GM12878 (cell line): ENCODE measurements at regions of chr3 and their contacts with region 1.

Region 1: DNA sequence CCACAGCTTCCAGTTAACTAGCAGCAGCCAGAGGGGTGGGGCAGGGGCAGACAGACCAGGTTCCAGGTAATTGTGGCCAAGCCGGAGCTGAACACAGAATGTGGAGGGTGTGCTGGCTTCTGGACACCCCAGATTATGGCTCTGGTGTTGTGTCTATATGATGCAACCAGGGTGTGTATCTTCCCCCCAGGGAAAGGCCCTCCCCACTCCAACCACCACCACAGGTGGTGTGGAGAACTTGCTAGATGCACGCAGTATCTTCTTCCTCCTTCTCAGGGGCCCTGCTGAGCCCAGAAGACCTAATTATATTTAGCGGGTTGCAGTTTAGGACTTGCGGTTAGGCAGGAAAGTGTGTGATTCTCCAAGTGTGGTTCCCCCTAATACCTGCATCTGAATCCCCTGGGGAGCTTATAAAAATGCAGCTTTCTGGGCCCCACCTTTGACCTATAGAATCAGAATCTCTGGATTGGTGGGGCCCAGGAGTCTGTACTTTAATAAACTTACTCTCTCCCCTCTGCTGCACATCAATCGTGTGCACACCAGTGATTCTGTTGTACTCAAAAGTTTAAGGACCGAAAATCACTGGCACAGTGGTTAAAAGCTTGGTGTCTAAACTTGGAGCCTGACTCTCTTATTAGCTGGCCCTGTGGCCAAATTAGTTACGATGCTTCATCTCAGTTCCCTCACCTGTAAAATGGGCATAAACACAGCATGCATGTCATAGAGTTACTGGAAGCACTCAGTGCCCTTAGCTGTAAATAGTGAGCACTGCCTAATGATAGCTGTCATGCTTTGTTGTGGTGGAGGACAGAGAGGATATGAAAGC is 379.1 kb upstream of the PROK2 start:
- DNase-seq: peak; percentile 96
- ATAC-seq: peak; percentile 90
- H3K4me3 ChIP-seq: 0 out of 2 replicates have a peak overlapping the region, but pooled peaks have one; percentile 32
- H3K27ac ChIP-seq: peak overlapping the region; percentile 93
- H3K4me1 ChIP-seq: peaks cover 35% of the 10 kb centered on the region
- H3K27me3 ChIP-seq: no peaks in the 10 kb centered on the region
- CTCF ChIP-seq: no peak
- EP300 ChIP-seq: peak; percentile 93
- POLR2A ChIP-seq: peak; percentile 72
- RAD21 ChIP-seq: peak; percentile 36

Region 2: DNA sequence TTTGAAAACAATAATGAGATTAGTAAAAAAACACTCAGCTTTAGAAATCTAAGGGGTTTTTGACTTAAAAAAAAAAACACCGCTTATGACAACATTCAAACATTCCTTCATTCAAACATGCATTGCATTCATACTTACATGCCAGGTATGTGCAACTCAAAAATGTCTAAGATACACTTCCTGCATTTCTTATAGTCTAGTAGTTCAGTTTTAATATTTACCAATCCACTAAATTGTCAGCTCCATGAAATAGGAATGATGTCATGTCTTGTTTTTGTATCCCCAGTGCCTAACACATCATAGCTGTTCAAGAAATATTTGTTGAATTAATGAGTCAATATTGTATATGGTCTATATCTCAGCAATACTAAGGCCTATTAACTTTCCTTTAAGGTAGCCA is 490.5 kb before region 1 on chr3:
- CTCF ChIA-PET with region 1: no interaction called
- POLR2A ChIA-PET with region 1: no interaction called
- RAD21 ChIA-PET with region 1: no interaction called
- SMC1A ChIA-PET with region 1: no interaction called
- in situ Hi-C with region 1: no loop called
- intact Hi-C with region 1: no loop called
- DNase-seq: no peak
- ATAC-seq: no peak
- H3K4me3 ChIP-seq: no peak overlapping the region
- H3K27ac ChIP-seq: no peak overlapping the region
- H3K4me1 ChIP-seq: no peaks in the 10 kb centered on the region
- H3K27me3 ChIP-seq: peaks cover 0 to 3% of the 10 kb centered on the region in 2 experiments; a peak in 2 of 4 replicates
- CTCF ChIP-seq: no peak
- EP300 ChIP-seq: no peak
- POLR2A ChIP-seq: no peak
- RAD21 ChIP-seq: no peak

Region 3: DNA sequence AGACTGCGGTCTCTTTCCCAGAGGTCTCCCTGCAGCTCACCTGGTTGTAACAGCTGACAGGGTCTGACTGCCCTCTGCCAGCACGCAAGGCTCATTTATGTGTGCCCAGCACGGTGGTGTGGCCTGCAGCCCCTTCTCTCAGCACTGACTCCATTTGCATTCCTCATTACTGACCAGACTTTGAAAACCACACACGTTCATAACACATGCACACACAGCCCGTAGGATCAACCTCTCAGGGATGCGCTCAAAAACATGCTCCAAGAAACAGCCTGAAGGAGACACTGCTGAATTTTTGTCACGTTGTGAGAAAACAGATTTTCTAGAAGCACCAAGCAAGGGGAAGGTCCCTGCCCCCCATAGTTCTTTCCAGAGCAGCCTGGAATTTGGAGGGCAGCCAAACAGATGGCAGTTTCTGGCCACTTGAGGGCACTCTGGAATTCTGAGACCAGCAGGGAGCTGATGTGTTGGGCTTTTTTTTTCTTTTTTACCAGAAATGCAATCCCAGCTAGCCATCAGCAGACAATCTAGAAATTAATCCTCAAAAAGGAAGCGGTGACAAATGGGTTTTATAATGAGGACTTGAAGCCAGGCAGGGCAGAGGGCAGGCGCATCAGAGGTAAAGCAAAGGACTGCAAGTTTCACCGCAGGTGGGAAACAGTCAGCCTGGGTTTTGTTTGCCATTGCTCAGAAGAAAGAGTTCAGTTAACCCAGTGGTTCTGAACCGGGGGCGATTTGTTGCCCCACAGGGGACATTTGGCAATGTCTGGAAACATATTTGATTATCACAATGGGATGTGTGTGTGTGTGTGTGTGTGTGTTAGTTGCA is 208.6 kb before region 1 on chr3:
- CTCF ChIA-PET with region 1: interaction called, 3 read pairs
- POLR2A ChIA-PET with region 1: no interaction called
- RAD21 ChIA-PET with region 1: no interaction called
- SMC1A ChIA-PET with region 1: interaction called, 9 read pairs
- in situ Hi-C with region 1: no loop called
- intact Hi-C with region 1: loop called (anchors 10 kb)
- DNase-seq: peak; percentile 61
- ATAC-seq: peak; percentile 81
- H3K4me3 ChIP-seq: no peak overlapping the region
- H3K27ac ChIP-seq: no peak overlapping the region
- H3K4me1 ChIP-seq: peaks cover 22% of the 10 kb centered on the region
- H3K27me3 ChIP-seq: no peaks in the 10 kb centered on the region
- CTCF ChIP-seq: peak; percentile 46 to 81 (median 67); a peak in 5 of 6 replicates
- EP300 ChIP-seq: no peak
- POLR2A ChIP-seq: no peak
- RAD21 ChIP-seq: peak; percentile 85

Region 4: GRCh38 chr3:72082186-72082715 is 81.8 kb before region 1 on chr3:
- CTCF ChIA-PET with region 1: interaction called, 4 read pairs
- POLR2A ChIA-PET with region 1: interaction called, 3 read pairs
- RAD21 ChIA-PET with region 1: interaction called, 25 read pairs
- SMC1A ChIA-PET with region 1: interaction called, 46 read pairs
- in situ Hi-C with region 1: no loop called
- intact Hi-C with region 1: loop called (anchors 1 kb)
- DNase-seq: peak; percentile 80
- ATAC-seq: peak; percentile 79
- H3K4me3 ChIP-seq: peak overlapping the region; percentile 33; the same call in 1 of the 2 replicates
- H3K27ac ChIP-seq: peak overlapping the region; percentile 78
- H3K4me1 ChIP-seq: peaks cover 71% of the 10 kb centered on the region
- H3K27me3 ChIP-seq: no peaks in the 10 kb centered on the region
- CTCF ChIP-seq: no peak
- EP300 ChIP-seq: peak; percentile 46 to 69; a peak in 2 of 4 replicates
- POLR2A ChIP-seq: no peak
- RAD21 ChIP-seq: no peak

Region 5: DNA sequence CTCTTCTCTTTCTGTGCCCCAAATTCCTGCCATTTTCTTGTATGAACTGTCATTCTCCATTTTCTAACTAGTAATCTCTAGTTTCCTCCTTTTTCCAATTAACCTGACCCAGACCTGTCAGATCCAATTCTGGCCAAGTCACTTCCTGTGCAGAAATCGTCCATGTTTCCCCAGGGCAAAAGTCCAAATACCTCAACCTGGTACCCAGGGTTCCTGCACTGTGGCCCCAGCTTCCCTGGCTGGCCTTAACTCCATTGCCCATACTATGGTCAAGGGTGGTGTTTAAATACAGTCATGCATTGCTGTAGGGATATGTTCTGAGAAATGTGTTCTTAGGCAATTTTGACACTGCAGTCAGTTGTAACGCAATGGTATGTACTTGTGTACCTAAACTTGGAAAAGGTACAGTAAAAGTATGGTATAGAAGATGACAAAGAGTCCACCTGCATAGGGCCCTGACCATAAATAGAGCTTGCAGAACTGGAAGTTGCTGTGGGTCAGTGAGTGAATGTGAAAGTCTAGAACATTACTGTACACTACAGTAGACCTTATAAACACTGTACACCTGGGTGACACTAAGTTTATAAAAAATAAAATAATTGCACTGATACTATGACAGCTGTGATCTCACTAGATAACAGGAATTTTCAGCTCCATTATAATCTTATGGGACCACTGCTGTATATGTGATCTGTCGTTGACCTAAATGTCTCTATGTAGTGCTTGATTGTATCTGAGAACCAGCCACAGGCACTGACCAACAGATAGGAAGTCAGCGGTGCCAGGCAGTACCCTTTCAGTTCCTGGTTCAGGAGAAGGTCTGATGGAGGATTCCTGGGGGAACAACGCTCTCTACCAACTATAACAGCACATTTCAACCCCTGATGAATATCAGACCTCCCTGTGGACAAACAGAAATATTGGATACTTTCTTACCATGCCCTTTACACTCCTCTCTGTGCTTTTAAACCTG is 42.9 kb before region 1 on chr3:
- CTCF ChIA-PET with region 1: no interaction called
- POLR2A ChIA-PET with region 1: no interaction called
- RAD21 ChIA-PET with region 1: no interaction called
- SMC1A ChIA-PET with region 1: interaction called, 3 read pairs
- in situ Hi-C with region 1: no loop called
- intact Hi-C with region 1: loop called (anchors 1 kb)
- DNase-seq: peak; percentile 16
- ATAC-seq: peak; percentile 91
- H3K4me3 ChIP-seq: no peak overlapping the region
- H3K27ac ChIP-seq: no peak overlapping the region
- H3K4me1 ChIP-seq: peaks cover 25% of the 10 kb centered on the region
- H3K27me3 ChIP-seq: no peaks in the 10 kb centered on the region
- CTCF ChIP-seq: no peak
- EP300 ChIP-seq: no peak; a peak in 1 of 4 replicates
- POLR2A ChIP-seq: no peak
- RAD21 ChIP-seq: no peak

Region 6: GRCh38 chr3:72177083-72178050 is 13.3 kb after region 1 on chr3:
- CTCF ChIA-PET with region 1: interaction called, 6 read pairs
- POLR2A ChIA-PET with region 1: interaction called, 10 read pairs
- RAD21 ChIA-PET with region 1: interaction called, 23 read pairs
- SMC1A ChIA-PET with region 1: interaction called, 44 read pairs
- in situ Hi-C with region 1: no loop called
- intact Hi-C with region 1: loop called (anchors 1 kb)
- DNase-seq: no peak
- ATAC-seq: peak; percentile 64
- H3K4me3 ChIP-seq: peak overlapping the region; percentile 39
- H3K27ac ChIP-seq: peak overlapping the region; percentile 85
- H3K4me1 ChIP-seq: peaks cover 29% of the 10 kb centered on the region
- H3K27me3 ChIP-seq: no peaks in the 10 kb centered on the region
- CTCF ChIP-seq: no peak
- EP300 ChIP-seq: peak; percentile 21 to 40; a peak in 2 of 4 replicates
- POLR2A ChIP-seq: no peak
- RAD21 ChIP-seq: no peak

Region 7: DNA sequence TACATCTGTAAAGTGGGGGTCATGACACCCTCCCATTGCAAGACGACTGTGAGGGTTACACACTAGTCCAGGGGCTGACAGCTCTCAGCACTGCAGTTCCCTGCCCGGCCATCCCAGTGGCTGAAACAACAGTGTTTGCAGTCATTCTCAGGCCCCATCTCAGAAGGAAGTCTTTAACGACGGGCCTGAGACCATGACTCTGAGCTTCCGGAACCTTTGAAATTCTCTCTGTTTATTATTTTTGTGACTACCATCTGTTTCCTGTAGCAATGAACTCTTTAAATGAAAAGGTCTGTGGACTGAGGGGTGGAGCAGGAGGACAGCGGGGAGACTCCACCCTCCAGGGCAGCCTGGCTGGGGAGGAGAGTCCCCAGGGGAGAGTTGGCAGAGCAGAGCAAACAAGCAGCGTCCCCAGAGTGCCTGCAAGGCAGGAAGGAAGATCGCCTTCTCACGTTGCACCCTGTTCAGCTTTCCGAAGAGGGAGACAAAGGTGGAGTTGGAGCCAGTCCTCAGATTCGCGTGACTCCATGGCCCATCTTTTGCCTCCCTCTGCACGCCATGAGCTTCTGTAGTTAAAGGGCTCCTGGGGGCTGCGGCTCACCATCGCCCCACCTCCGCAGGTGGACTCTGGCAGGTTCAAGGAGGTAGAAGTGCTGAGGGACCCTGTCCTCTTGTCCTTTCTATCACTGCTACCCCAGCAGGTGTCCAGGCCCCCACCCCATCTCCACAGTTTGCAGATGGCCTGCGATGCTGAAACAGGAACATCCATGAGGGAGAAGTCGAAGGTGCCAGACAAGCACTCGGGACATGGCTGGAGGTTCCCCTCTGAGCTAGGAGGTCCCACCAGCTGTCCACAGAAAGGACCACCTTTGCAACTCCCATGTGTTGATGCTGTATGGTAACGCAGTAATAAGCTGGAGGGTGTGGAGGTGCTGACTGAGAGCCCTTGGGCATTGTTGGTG is 146.7 kb after region 1 on chr3:
- CTCF ChIA-PET with region 1: no interaction called
- POLR2A ChIA-PET with region 1: no interaction called
- RAD21 ChIA-PET with region 1: interaction called, 3 read pairs
- SMC1A ChIA-PET with region 1: no interaction called
- in situ Hi-C with region 1: no loop called
- intact Hi-C with region 1: loop called (anchors 1 kb)
- DNase-seq: peak; percentile 84
- ATAC-seq: peak; percentile 96
- H3K4me3 ChIP-seq: no peak overlapping the region
- H3K27ac ChIP-seq: no peak overlapping the region
- H3K4me1 ChIP-seq: peaks cover 19% of the 10 kb centered on the region
- H3K27me3 ChIP-seq: no peaks in the 10 kb centered on the region
- CTCF ChIP-seq: no peak
- EP300 ChIP-seq: no peak
- POLR2A ChIP-seq: peak; percentile 38; the same call in 1 of the 2 replicates
- RAD21 ChIP-seq: peak; percentile 3; the same call in 1 of the 2 replicates

Region 8: DNA sequence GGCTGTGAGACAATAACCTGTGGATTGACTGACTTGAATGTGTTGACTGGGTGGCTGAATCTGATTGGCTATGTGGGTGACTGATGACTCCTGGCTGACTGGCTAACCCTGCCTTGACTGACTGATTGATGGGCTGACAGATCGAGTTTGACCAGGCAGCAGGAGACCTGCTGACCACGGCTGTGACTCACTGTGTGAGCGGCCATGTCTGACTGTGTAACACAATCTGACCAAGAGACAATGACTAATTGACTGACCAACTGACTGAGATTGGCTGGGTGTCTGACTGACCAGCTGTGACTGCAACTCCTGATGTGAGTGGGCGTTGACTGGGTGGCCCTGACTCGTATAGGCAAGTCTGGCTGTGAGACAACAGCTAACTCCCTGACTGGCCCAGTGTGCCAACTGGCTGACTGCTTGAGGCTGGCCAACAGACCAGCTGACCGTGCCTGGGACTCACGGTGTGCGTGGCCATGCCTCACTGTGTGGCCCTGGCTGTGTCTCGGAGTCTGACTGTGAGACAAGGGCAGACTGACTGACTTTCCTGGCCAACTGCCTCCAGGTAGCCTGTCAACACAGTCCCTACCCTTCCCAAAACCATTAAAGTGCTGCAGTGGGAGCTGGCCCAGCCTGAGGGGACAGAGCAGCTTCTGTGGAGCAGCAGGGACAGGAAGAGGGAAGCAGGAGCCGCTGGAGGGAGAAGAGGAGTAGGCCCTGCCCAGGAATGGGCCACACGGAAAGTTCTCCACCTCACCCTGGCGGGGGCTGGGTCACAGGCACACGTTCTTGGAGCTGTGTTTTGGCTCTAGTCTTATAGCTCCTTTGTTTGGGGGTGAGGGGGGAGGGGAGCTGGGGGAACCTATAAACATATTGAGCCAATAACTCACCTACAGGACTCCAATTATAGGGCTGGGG is 175.4 kb after region 1 on chr3:
- CTCF ChIA-PET with region 1: no interaction called
- POLR2A ChIA-PET with region 1: no interaction called
- RAD21 ChIA-PET with region 1: no interaction called
- SMC1A ChIA-PET with region 1: no interaction called
- in situ Hi-C with region 1: no loop called
- intact Hi-C with region 1: no loop called
- DNase-seq: peak; percentile 15
- ATAC-seq: peak; percentile 69
- H3K4me3 ChIP-seq: no peak overlapping the region
- H3K27ac ChIP-seq: no peak overlapping the region
- H3K4me1 ChIP-seq: peaks cover 7% of the 10 kb centered on the region
- H3K27me3 ChIP-seq: no peaks in the 10 kb centered on the region; a peak in 1 of 4 replicates
- CTCF ChIP-seq: no peak
- EP300 ChIP-seq: no peak
- POLR2A ChIP-seq: no peak
- RAD21 ChIP-seq: no peak

Region 9: DNA sequence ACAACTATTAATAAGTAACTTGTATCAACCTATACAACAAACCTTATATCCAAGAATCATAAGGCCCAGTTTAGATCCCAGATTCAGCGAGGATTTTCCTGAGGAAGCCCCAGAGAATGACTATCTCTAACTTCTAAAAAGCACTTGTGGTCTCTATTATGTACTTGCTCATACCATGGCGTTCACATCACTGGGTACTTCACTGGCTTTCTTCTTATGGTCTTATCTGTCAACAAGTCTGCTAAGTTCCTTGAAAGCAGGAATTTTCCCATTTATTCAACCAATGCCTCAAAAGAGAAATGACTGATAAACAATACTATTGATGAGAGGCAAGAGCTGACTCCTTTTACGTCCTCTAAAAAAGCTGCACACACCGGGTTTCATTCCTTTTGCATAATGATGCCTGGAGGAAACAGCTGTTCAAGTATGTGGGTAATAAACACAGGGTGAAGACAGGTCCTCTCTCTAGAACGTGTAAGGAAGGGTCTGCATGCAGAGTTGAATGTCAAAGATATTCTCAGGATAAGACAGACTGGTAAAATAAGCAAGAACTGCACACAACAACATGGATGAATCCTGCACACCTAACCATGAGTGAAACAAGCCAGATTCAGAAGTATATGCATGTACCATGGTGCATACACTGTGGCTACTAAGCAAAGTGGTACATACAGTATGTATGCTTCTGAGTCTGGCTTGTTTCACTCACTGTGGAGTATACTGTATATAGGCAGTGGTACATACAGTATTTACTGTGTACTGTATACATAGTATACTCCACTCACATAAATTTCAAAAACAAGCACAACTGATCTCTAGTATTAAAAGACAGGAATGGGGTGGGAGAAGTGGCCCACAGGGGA is 275.5 kb after region 1 on chr3:
- CTCF ChIA-PET with region 1: no interaction called
- POLR2A ChIA-PET with region 1: no interaction called
- RAD21 ChIA-PET with region 1: interaction called, 4 read pairs
- SMC1A ChIA-PET with region 1: interaction called, 6 read pairs
- in situ Hi-C with region 1: no loop called
- intact Hi-C with region 1: loop called (anchors 5 kb)
- DNase-seq: no peak
- ATAC-seq: peak; percentile 49
- H3K4me3 ChIP-seq: no peak overlapping the region
- H3K27ac ChIP-seq: no peak overlapping the region
- H3K4me1 ChIP-seq: peaks cover 26% of the 10 kb centered on the region
- H3K27me3 ChIP-seq: no peaks in the 10 kb centered on the region
- CTCF ChIP-seq: no peak
- EP300 ChIP-seq: no peak
- POLR2A ChIP-seq: no peak
- RAD21 ChIP-seq: no peak